Activated B cell treated with CpG ODN at 0.5 μM for 24 hours (primary cell): ENCODE measurements at regions of chr1 and their contacts with region 1.

Region 1: GRCh38 chr1:6579374-6580118 is at the start of gene ZBTB48:
- DNase-seq: peak; percentile 95
- ATAC-seq: peak; percentile 97
- H3K4me3 Mint-ChIP-seq: peak within 1 kb of the TSS; percentile 95
- H3K27ac Mint-ChIP-seq: peak within 1 kb of the TSS; percentile 94
- H3K4me1 Mint-ChIP-seq: peaks cover 37% of the 10 kb centered on the region
- H3K27me3 Mint-ChIP-seq: no peaks in the 10 kb centered on the region
- CTCF ChIP-seq: no peak
- total RNA-seq, gene ZBTB48: 53.2 and 53.8 TPM in 2 replicates

Region 2: GRCh38 chr1:5992026-5992813 is 587.3 kb before region 1 on chr1 and contains the start of gene NPHP4:
- CTCF ChIA-PET with region 1: no interaction called
- POLR2A ChIA-PET with region 1: interaction called, 10 read pairs
- intact Hi-C with region 1: no loop called
- DNase-seq: peak; percentile 93
- ATAC-seq: peak; percentile 90
- H3K4me3 Mint-ChIP-seq: peak within 1 kb of the TSS; percentile 94
- H3K27ac Mint-ChIP-seq: peak within 1 kb of the TSS; percentile 84
- H3K4me1 Mint-ChIP-seq: peaks cover 34% of the 10 kb centered on the region
- H3K27me3 Mint-ChIP-seq: no peaks in the 10 kb centered on the region
- CTCF ChIP-seq: no peak
- total RNA-seq, gene NPHP4: 6.2 and 8.0 TPM in 2 replicates

Region 3: DNA sequence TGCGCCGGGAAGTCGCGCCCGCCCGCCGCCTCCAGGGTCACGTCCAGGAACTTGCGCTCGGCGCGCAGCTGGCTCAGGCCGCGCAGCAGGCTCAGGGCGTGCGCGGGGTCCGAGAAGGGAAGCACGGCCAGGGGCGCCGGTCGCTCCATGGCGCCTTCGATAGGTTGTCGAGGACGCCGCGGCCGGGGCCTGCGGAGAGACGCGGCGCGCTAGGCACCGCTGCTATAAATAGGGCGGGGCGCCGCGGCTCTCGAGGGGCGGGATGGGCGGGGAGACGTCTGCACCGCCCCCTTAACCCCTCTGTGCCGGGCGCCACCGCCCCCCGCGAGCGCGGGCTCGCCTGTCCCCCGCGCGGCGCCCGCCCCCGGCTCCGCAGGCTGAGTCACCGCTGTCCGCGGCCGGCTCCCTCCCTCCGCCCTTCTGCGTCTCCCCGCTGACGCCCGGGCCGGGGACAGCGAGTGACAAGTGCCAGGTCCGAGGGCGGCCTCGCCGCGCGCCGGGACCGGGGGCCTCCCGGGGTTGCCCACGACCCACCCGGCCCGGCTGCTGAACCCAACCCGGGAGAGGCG is 23.2 kb after region 1 on chr1 and contains the start of gene KLHL21:
- CTCF ChIA-PET with region 1: interaction called, 4 read pairs
- POLR2A ChIA-PET with region 1: interaction called, 94 read pairs
- intact Hi-C with region 1: loop called (anchors 1 kb)
- DNase-seq: peak; percentile 86
- ATAC-seq: peak; percentile 70
- H3K4me3 Mint-ChIP-seq: peak within 1 kb of the TSS; percentile 91
- H3K27ac Mint-ChIP-seq: peak within 1 kb of the TSS; percentile 96
- H3K4me1 Mint-ChIP-seq: peaks cover 40% of the 10 kb centered on the region
- H3K27me3 Mint-ChIP-seq: no peaks in the 10 kb centered on the region
- CTCF ChIP-seq: no peak
- total RNA-seq, gene KLHL21: 14.6 and 15.9 TPM in 2 replicates

Region 4: GRCh38 chr1:6624710-6625583 is 45.4 kb after region 1 on chr1 and contains the start of gene THAP3:
- CTCF ChIA-PET with region 1: no interaction called
- POLR2A ChIA-PET with region 1: interaction called, 10 read pairs
- intact Hi-C with region 1: loop called (anchors 1 kb)
- DNase-seq: peak; percentile 83
- ATAC-seq: peak; percentile 97
- H3K4me3 Mint-ChIP-seq: peak within 1 kb of the TSS; percentile 86
- H3K27ac Mint-ChIP-seq: peak within 1 kb of the TSS; percentile 71
- H3K4me1 Mint-ChIP-seq: peaks cover 32% of the 10 kb centered on the region
- H3K27me3 Mint-ChIP-seq: no peaks in the 10 kb centered on the region
- CTCF ChIP-seq: no peak
- total RNA-seq, gene THAP3: 16.2 and 21.3 TPM in 2 replicates

Region 5: DNA sequence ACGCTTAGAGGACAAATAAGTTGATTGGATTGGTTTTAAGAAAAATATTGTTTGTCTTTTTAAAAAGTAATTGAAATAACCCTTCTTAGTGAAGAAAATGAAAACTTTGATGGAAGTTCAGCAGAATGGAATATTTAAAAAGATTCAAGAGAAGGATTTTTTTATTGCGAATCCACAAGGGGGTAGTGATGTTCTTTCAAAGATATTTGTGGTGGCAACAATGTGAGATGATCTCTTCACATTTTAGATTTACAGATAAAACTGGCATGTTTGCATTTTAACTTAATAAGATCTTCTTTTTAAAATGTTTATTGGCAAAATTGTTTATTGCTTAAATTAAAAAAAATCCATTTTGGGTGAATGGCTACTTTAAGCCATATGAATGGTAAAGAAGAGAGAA is 214.6 kb after region 1 on chr1:
- CTCF ChIA-PET with region 1: no interaction called
- POLR2A ChIA-PET with region 1: interaction called, 14 read pairs
- intact Hi-C with region 1: no loop called
- DNase-seq: no peak
- ATAC-seq: no peak
- H3K4me3 Mint-ChIP-seq: no peak overlapping the region
- H3K27ac Mint-ChIP-seq: no peak overlapping the region
- H3K4me1 Mint-ChIP-seq: peaks cover 27% of the 10 kb centered on the region
- H3K27me3 Mint-ChIP-seq: no peaks in the 10 kb centered on the region
- CTCF ChIP-seq: no peak

Region 6: GRCh38 chr1:6822530-6823359 is 243.2 kb after region 1 on chr1:
- CTCF ChIA-PET with region 1: no interaction called
- POLR2A ChIA-PET with region 1: no interaction called
- intact Hi-C with region 1: no loop called
- DNase-seq: no peak
- ATAC-seq: no peak
- H3K4me3 Mint-ChIP-seq: peak overlapping the region; percentile 5
- H3K27ac Mint-ChIP-seq: no peak overlapping the region
- H3K4me1 Mint-ChIP-seq: peaks cover 49% of the 10 kb centered on the region
- H3K27me3 Mint-ChIP-seq: no peaks in the 10 kb centered on the region
- CTCF ChIP-seq: no peak

Region 7: DNA sequence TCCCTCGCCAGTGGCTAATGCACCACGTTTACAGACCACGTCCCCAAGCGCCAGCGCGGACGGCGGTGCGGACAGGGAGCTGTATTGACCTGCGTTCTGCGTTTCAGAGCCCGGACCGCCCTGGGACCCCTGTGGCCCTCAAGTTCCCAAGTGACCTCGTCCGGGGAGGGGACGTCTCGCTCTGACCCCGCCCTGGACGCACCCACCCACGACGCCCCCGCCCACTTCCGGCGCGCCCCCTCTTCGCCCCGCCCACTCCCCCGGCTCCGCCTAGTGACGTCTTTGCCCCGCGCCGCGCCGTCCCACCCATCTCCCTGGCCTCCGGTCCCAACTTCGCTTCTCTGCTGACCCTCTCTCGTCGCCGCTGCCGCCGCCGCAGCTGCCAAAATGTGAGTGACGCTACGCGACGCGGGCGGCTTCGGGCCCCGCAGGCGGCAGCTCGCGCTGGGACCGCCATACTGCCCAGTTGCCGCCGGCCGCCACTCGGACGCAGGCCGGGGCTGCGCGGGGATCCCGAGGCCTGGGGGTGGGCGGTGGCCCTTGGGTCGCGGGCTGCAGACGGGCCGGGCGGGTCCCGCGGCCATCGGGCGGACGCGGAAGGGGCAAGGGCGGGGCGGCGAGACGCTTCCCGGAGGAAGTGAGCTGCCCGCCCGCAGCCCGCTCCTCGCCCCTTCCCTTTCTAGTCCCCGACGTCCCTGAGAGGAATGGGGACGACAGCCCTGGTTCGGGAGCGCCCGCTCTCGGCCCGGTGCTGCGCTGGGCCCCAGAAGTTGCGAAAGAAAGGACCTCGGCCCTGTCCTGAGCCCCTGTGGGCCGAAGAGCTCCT is 1191.7 kb after region 1 on chr1 and contains the start of gene VAMP3:
- CTCF ChIA-PET with region 1: no interaction called
- POLR2A ChIA-PET with region 1: interaction called, 13 read pairs
- intact Hi-C with region 1: no loop called
- DNase-seq: peak; percentile 86
- ATAC-seq: peak; percentile 96
- H3K4me3 Mint-ChIP-seq: peak within 1 kb of the TSS; percentile 87
- H3K27ac Mint-ChIP-seq: peak within 1 kb of the TSS; percentile 77
- H3K4me1 Mint-ChIP-seq: peaks cover 32% of the 10 kb centered on the region
- H3K27me3 Mint-ChIP-seq: no peaks in the 10 kb centered on the region
- CTCF ChIP-seq: no peak
- total RNA-seq, gene VAMP3: 20.7 and 31.8 TPM in 2 replicates